ENCODE measurements at regions of chr15 and their contacts with region 1.

Region 1: DNA sequence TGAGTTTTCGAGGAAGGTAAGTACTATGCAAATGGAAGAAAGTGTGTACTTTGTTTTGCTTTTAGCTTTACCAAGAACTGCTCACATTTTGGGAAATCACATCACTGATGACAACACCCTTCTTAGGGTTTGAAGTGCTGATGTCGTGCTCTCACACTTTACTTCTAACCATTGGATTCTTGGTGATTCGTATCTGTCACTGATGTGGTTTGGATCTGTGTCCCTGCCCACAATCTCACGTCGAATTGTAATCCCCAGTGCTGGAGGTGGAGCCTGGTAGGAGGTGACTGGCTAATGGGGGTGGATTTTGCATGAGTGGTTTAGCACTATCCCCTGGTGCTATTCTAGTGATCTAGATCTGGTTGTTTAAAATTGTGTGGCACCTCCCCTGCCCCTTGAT is 75.4 kb upstream of the RGMA start:
- DNase-seq: peak; percentile 80
- H3K4me3 Mint-ChIP-seq: no peak overlapping the region
- H3K27ac Mint-ChIP-seq: peak overlapping the region; percentile 50
- H3K4me1 Mint-ChIP-seq: peaks cover 15% of the 10 kb centered on the region
- H3K27me3 Mint-ChIP-seq: no peaks in the 10 kb centered on the region

Region 2: GRCh38 chr15:92803847-92804609 is 360.4 kb before region 1 on chr15:
- CTCF ChIA-PET with region 1: no interaction called
- POLR2A ChIA-PET with region 1: no interaction called
- intact Hi-C with region 1: loop called (anchors 1 kb)
- DNase-seq: peak; percentile 94
- H3K4me3 Mint-ChIP-seq: peak overlapping the region; percentile 10
- H3K27ac Mint-ChIP-seq: peak overlapping the region; percentile 88
- H3K4me1 Mint-ChIP-seq: peaks cover 36% of the 10 kb centered on the region
- H3K27me3 Mint-ChIP-seq: no peaks in the 10 kb centered on the region

Region 3: DNA sequence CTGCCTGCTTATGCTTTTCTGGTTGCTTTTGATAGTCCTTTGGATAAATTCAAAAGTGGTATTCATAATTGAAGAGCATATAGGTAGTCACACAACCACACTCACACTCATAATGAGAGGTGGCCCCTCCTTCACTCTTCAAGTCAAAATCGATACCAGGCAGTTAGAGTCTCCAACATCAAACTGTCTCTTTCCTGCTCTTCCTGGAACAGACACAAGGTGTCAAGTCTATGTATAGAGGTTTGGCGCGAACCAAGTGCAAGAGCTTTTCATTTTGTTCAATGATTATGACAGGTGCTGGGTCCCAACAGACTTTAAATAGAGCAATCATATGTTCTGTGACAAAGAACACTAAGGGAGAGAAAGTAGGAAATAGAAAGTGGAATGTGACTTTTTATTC is 45.5 kb before region 1 on chr15:
- CTCF ChIA-PET with region 1: no interaction called
- POLR2A ChIA-PET with region 1: no interaction called
- intact Hi-C with region 1: loop called (anchors 2 kb)
- DNase-seq: peak; percentile 11
- H3K4me3 Mint-ChIP-seq: no peak overlapping the region
- H3K27ac Mint-ChIP-seq: no peak overlapping the region
- H3K4me1 Mint-ChIP-seq: peaks cover 7% of the 10 kb centered on the region
- H3K27me3 Mint-ChIP-seq: peaks cover 12% of the 10 kb centered on the region